ENCODE measurements at regions of chr5 and their contacts with region 1.

Region 1: DNA sequence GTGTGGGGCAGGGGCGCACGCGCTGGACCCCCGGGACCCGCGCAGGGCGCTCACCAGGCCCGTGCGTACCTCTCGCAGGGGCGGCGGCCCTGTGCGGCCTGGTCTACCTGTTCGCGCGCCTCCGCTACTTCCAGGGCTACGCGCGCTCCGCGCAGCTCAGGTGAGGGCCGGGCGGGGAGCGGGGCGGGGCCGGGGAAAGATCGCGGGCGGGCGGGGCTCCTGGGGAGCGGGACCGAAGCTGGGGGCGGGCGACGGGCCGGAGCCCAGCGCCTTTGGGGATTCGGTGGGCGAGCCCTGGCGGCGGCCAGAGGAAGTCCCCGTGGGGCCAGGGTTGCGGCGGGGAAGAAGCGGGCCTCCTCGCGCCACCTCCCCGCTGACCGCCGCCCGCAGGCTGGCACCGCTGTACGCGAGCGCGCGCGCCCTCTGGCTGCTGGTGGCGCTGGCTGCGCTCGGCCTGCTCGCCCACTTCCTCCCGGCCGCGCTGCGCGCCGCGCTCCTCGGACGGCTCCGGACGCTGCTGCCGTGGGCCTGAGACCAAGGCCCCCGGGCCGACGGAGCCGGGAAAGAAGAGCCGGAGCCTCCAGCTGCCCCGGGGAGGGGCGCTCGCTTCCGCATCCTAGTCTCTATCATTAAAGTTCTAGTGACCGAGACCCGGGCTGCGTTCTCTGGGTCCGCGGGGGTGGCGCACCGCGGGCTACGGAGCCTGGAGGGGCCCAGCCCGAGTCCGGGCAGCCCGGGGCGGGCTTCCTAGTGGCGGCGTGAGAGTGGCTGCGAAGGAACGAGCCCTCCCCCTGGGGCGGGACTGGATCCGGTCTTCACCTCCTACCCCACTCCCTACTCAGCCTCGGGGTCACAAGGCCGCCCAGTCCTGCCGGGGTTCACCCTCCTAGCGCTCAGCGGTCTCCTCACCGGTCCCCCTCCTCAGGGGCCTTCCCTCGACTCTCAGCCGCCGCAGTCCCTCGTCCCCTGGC is 2.4 kb downstream of the LTC4S start:
- DNase-seq: peak; percentile 78
- ATAC-seq: peak; percentile 78
- H3K4me3 Mint-ChIP-seq: peak overlapping the region; percentile 64
- H3K27ac Mint-ChIP-seq: peak overlapping the region; percentile 7
- H3K4me1 Mint-ChIP-seq: peaks cover 29% of the 10 kb centered on the region
- H3K27me3 Mint-ChIP-seq: no peaks in the 10 kb centered on the region
- CTCF ChIP-seq: peak; percentile 32

Region 2: DNA sequence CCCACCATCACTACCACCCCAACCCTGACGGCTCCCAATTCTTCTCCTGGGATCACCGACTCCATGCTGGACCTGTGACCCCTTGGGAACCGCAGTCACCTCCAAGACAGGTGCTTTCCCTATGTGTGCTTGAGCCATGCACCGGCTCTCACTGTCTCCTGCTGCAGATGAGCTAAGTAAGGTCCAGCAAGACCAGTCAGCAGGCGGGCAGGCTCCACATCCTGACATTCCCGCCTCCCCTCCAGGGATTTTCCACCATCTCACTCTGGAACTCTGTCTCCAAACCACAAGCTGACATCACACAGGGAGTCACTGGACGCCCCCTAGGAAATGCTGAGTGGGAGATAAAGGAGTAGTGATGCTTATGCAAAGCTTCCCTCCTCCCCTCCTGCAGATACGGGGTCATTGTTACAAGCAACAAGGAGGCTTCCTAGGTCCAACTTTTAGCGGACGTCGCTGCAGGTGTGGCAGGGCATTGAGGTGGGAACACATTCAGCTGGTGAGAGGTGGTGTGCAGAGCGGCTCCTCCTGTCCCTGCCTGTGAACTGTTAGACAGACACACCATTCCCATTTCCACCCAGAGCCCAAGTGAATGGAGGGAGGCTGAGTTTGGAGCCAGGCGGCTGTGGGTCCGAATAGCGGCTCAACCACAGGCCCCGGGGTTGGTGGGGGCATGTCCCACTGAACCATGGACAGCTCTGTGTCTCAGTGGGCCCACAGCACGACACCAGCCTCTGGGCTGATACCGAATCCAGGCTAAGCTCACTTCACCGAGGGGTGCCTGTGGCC is 1434.3 kb before region 1 on chr5:
- CTCF ChIA-PET with region 1: no interaction called
- POLR2A ChIA-PET with region 1: no interaction called
- intact Hi-C with region 1: no loop called
- DNase-seq: no peak
- ATAC-seq: no peak
- H3K4me3 Mint-ChIP-seq: no peak overlapping the region
- H3K27ac Mint-ChIP-seq: no peak overlapping the region
- H3K4me1 Mint-ChIP-seq: no peaks in the 10 kb centered on the region
- H3K27me3 Mint-ChIP-seq: no peaks in the 10 kb centered on the region
- CTCF ChIP-seq: no peak

Region 3: DNA sequence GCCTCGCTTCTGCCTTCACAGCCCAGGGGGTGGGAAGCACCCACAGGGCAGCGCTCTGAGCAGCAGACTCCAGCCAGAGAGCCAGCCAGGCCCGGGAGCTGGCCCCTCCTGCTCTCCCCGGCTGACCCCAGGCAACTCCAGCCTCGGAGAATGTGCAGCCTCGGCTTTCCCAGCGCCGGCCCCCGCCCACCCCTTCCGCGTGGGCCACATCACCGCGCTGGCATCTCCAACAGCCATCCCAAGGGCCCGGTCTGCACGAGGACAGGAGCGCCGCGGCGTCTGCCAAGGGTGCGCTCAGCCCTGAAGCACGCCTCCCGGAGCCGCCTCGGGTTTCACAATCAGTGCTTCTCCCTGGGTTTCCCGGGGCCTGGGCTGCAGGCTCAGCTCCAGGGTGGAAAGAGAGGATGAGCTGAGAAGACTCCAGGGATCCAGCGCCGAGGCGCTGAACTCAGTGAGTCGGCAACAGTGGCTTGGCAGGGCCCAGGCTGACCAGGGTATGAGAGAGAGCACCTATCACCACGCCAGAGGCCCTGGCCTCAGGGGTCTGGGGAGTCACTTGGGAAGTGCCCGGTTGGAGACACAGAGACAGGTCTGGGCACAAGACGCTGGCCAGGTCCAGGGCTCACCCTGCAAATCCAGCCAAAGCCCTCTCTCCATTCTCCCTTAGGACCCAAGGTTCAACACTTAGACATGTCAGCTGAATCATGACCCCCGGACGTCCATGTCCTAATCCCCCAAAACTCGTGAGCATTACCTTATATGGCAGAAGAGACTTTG is 530.4 kb before region 1 on chr5:
- CTCF ChIA-PET with region 1: no interaction called
- POLR2A ChIA-PET with region 1: no interaction called
- intact Hi-C with region 1: no loop called
- DNase-seq: peak; percentile 6
- ATAC-seq: no peak
- H3K4me3 Mint-ChIP-seq: no peak overlapping the region
- H3K27ac Mint-ChIP-seq: no peak overlapping the region
- H3K4me1 Mint-ChIP-seq: no peaks in the 10 kb centered on the region
- H3K27me3 Mint-ChIP-seq: no peaks in the 10 kb centered on the region
- CTCF ChIP-seq: no peak

Region 4: DNA sequence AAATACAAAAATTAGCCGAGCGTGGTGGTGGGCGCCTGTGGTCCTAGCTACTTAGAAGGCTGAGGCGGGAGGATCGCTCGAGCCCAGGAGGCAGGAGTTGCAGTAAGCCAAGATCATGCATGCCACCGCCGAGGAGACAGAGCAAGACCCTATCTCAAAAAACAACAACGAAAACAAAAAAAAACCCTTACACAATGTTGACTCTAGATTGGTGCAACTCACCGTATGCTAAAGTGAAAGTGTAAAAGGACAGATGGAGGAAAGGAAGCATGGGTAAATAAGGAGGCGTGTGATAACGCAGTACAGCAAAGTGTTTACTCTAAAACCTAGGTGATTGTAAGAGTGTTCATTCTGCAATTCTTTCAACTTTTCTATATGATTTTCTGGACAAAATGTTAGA is 261.7 kb before region 1 on chr5:
- CTCF ChIA-PET with region 1: no interaction called
- POLR2A ChIA-PET with region 1: no interaction called
- intact Hi-C with region 1: no loop called
- DNase-seq: no peak
- ATAC-seq: peak; percentile 33
- H3K4me3 Mint-ChIP-seq: peak overlapping the region; percentile 77
- H3K27ac Mint-ChIP-seq: peak overlapping the region; percentile 80
- H3K4me1 Mint-ChIP-seq: peaks cover 35% of the 10 kb centered on the region
- H3K27me3 Mint-ChIP-seq: no peaks in the 10 kb centered on the region
- CTCF ChIP-seq: no peak

Region 5: GRCh38 chr5:179678223-179679013 is 117.7 kb before region 1 on chr5:
- CTCF ChIA-PET with region 1: no interaction called
- POLR2A ChIA-PET with region 1: no interaction called
- intact Hi-C with region 1: loop called (anchors 5 kb)
- DNase-seq: peak; percentile 91
- ATAC-seq: peak; percentile 91
- H3K4me3 Mint-ChIP-seq: peak overlapping the region; percentile 96
- H3K27ac Mint-ChIP-seq: peak overlapping the region; percentile 94
- H3K4me1 Mint-ChIP-seq: peaks cover 32% of the 10 kb centered on the region
- H3K27me3 Mint-ChIP-seq: no peaks in the 10 kb centered on the region
- CTCF ChIP-seq: no peak

Measured in activated B cell treated with CpG ODN at 0.5 μM for 24 hours (primary cell).